Gastrocnemius medialis (tissue), 4 donors: ENCODE measurements at regions of chr4 and their contacts with region 1.

Region 1: GRCh38 chr4:75849461-75849860 is 52.8 kb downstream of the PPEF2 start:
- DNase-seq: no peak
- ATAC-seq: no peak
- H3K4me3 ChIP-seq: no peak overlapping the region
- H3K27ac ChIP-seq: no peak overlapping the region
- H3K4me1 ChIP-seq: peaks cover 4 to 5% of the 10 kb centered on the region in 2 donors
- H3K27me3 ChIP-seq: no peaks in the 10 kb centered on the region
- CTCF ChIP-seq: no peak
- POLR2A ChIP-seq: no peak

Region 2: GRCh38 chr4:75289914-75290582 is 559.4 kb before region 1 on chr4:
- in situ Hi-C with region 1: no loop called
- intact Hi-C with region 1: no loop called
- DNase-seq: no peak
- ATAC-seq: no peak
- H3K4me3 ChIP-seq: no peak overlapping the region
- H3K27ac ChIP-seq: no peak overlapping the region
- H3K4me1 ChIP-seq: no peaks in the 10 kb centered on the region
- H3K27me3 ChIP-seq: no peaks in the 10 kb centered on the region
- CTCF ChIP-seq: no peak
- POLR2A ChIP-seq: no peak

Region 3: DNA sequence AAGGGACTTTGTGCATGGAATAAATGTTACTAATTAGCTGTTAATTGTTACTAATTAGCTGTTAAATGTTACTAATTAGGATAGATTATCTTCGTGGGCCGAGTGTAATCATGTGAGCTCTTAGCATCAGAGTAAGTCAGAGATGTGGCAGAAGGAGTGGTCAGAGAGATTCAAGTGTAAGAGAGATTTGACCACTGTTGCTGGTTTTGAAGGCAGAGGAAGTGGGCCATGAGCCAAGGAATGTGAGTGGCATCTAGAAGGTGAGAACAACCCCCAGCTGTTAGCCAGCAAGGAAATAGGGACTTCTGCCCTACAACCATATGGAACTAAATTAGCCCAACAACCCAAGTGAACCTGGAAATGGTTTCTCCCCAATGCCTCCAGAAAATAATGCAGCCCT is 265.4 kb before region 1 on chr4:
- in situ Hi-C with region 1: loop called in 2 of 4 experiments (anchors 5 kb)
- intact Hi-C with region 1: no loop called
- DNase-seq: no peak
- ATAC-seq: no peak
- H3K4me3 ChIP-seq: no peak overlapping the region
- H3K27ac ChIP-seq: no peak overlapping the region
- H3K4me1 ChIP-seq: no peaks in the 10 kb centered on the region
- H3K27me3 ChIP-seq: no peaks in the 10 kb centered on the region
- CTCF ChIP-seq: no peak
- POLR2A ChIP-seq: no peak